ENCODE measurements at regions of chr13 and their contacts with region 1.

Region 1: GRCh38 chr13:98842864-98843481 is 90.5 kb upstream of the SLC15A1 start:
- DNase-seq: peak; percentile 76
- H3K4me3 Mint-ChIP-seq: no peak overlapping the region
- H3K27ac Mint-ChIP-seq: no peak overlapping the region
- H3K4me1 Mint-ChIP-seq: no peaks in the 10 kb centered on the region
- H3K27me3 Mint-ChIP-seq: no peaks in the 10 kb centered on the region

Region 2: DNA sequence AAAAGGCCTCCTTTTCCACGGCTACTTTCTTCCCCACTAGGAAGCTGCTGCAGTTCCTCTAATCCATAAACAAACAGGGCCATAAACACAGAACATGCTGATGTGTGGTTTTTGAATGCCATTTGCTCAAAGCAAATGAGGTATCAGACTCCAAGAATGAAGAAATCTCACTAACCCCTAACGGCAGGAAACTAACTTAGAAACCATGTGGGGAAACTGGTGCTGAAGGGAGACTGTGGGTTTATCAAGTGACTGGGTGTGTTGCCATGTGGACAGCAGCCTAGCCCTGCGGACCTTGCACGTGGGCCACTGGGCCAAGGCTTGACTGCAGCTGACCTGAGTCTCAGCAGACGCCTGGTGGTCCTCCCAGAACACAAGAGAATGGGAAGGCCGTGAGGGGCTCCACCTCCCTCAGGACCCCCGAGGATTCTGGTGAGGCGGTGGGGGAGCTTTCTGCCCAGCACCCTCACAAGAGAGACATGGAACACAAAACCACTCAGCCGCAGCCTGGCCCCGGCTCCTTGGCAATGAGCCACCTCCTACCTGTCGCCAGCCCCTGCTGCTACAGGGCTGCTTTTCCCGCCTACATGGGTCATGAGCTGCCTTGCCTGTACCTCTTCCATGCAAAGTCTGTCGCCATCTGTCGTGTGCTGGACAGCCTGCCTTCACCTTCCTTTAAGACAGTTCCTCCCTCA is 101.1 kb before region 1 on chr13:
- CTCF ChIA-PET with region 1: no interaction called
- DNase-seq: no peak
- H3K4me3 Mint-ChIP-seq: no peak overlapping the region
- H3K27ac Mint-ChIP-seq: no peak overlapping the region
- H3K4me1 Mint-ChIP-seq: no peaks in the 10 kb centered on the region
- H3K27me3 Mint-ChIP-seq: peaks cover 3% of the 10 kb centered on the region

Region 3: DNA sequence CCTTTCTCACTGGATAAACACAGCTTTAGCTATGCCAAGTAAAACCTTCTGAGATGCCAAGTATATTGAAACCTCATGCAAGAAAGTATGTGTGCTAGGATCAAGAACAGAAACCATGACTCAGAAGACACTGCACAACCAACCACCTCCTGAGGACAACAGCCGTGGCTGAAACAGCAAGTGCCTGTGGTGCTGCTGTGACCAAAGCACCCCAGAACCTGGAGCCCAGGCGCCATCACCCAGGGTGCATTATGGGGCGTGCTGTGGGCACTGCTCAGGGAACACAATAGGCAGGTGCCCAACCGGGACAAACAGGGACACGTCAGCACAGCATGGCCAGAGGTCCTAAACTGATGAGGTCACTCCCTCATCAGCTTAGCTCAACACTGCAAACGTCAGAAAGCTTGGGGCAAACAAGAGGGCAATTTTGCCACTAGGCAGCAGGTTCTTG is 10.8 kb after region 1 on chr13:
- CTCF ChIA-PET with region 1: interaction called, 27 read pairs
- DNase-seq: peak; percentile 55
- H3K4me3 Mint-ChIP-seq: no peak overlapping the region
- H3K27ac Mint-ChIP-seq: peak overlapping the region; percentile 14
- H3K4me1 Mint-ChIP-seq: peaks cover 15% of the 10 kb centered on the region
- H3K27me3 Mint-ChIP-seq: no peaks in the 10 kb centered on the region